ENCODE measurements at regions of chr11 and their contacts with region 1.

Region 1: DNA sequence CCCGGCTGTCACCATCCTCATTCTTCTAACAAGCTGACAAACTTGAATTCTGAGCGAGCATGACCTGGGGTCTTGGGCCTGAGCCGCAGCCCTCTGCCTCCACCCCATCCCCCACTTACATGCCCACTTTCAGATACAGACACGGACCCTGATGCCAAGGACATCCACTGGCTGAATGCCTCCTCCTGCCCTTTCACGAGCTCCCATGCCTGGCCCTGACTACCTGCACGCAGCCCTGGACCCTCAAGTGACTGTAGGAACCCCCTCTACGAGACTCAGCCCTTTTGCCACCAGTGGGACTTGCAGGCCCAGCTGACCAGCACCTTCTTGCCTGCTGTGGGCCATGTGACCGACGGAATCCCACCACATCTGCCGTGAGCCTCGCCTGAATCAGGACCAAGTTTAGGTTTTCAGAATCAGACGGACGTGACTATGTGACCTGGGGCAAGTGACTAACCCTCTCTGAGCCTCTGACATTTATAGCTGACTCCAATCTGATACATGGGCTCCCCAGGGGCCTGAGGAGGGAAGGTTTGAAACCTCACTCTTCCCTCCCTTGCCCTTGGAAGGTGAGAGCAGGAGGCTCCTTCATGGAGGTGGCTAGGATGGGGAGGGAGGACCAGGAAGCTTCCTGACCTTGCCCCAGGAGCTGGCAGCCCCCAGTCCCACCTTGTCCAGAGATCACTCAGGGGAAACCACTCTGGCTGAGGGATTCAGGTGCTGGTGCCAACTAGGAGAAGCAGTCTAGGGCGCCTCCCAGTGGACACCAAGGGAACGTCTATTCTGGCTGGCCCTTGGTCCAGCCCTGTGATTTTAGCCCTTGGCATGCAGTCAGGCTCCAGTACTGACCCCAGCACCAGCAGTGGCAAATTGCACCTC is 46.9 kb upstream of the SYT7 start:
- DNase-seq: peak; percentile 89
- ATAC-seq: peak; percentile 78
- H3K4me3 ChIP-seq: no peak overlapping the region
- H3K27ac ChIP-seq: peak overlapping the region; percentile 85
- H3K4me1 ChIP-seq: peaks cover 23% of the 10 kb centered on the region
- H3K27me3 ChIP-seq: no peaks in the 10 kb centered on the region
- CTCF ChIP-seq: peak; percentile 98

Region 2: DNA sequence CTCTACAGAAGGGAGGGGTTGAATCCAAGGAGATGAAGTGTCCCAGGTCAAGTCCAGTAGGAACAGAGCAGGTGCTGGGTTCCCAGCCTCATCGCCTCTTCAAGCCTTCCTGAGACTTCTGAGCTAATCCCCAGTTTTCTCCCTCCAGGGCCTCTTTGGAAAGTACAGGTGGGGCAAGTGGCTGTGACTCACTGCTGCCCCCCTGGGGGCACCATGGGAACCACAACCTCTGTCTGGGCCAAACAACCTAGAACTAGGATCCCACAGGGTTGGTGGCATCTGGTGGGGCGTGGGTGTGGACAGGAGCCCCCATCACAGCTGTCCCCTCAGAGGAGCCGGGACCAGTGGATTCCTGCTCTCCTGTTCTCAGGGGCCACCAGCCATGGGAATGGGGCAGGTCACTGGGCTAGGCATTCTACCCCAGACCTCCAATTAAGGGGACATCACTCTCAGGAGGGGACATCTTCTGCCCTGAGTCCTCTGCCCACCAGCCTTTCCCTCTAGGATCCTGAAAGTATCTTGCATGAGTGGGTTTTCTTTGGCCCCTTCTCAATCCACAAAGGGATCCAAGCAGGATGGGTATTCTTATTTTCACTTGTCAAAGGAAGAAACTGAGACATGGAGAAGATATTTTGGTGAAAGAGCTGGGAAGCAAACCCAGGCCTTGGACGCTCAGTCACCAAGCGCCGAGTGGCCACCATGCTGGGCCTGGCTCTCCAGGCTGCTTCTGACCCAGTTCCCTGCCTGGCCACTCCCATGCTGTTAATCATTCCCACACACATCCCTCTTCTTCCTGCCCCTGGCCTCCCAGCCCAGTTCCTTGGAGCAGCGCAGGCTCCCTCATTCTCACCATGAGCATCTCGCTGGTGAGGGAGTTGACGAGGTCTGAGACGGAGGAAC is 95.4 kb before region 1 on chr11:
- CTCF ChIA-PET with region 1: no interaction called
- POLR2A ChIA-PET with region 1: no interaction called
- intact Hi-C with region 1: loop called (anchors 5 kb)
- DNase-seq: peak; percentile 73
- ATAC-seq: peak; percentile 55
- H3K4me3 ChIP-seq: no peak overlapping the region
- H3K27ac ChIP-seq: peak overlapping the region; percentile 8; the same call in 1 of the 2 replicates
- H3K4me1 ChIP-seq: peaks cover 10% of the 10 kb centered on the region
- H3K27me3 ChIP-seq: no peaks in the 10 kb centered on the region
- CTCF ChIP-seq: peak; percentile 95

Region 3: GRCh38 chr11:61659414-61660209 is 31.8 kb after region 1 on chr11:
- CTCF ChIA-PET with region 1: no interaction called
- POLR2A ChIA-PET with region 1: no interaction called
- intact Hi-C with region 1: no loop called
- DNase-seq: peak; percentile 22
- ATAC-seq: no peak
- H3K4me3 ChIP-seq: no peak overlapping the region
- H3K27ac ChIP-seq: no peak overlapping the region
- H3K4me1 ChIP-seq: peaks cover 7% of the 10 kb centered on the region
- H3K27me3 ChIP-seq: no peaks in the 10 kb centered on the region
- CTCF ChIP-seq: peak; percentile 34; the same call in 1 of the 2 replicates